ENCODE measurements at regions of chr7 and their contacts with region 1.

Region 1: DNA sequence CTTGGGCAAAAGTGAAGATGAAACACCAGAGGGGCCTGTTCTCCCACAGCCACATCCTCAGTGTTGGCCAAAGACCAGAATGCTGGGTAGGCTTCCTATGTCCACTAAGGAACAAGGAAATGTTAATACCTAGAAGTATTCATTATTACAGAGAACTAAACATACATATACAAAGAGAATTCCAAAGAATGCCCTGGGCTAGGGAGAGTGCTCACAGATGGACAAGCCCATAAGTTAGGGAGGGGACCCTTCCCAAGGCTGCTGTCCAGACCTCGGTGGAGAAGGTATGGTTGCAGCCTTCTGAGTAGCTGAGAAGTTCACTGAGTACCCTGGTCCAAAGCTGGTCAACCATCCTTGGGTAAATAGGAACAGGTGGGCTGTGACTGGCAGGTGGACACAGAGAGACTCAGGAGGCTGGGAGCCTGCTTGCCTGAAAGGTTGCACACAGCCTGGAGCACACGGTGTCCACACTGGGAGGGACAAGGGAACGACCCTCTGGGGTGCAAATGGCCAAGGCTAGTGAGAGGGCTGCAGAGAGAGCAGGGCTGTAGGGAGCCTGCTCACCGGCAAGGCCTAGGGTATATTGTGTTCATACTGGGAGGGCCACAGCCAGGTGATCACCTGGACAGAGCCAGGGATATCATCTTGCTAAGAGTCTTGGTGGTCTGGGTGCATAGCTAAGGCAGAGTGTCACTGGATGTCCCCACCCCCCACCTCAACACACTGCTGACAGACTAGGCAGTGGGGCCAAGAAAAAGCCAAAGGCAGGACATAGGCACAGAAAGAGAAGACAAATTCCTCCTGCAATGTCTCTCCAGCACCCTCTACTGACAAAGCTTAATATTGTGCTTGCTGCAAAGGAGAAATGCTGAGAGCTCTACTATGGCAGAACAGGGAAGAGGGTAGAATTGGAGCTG is 40.3 kb downstream of the CPVL start:
- DNase-seq: peak; percentile 52 to 58
- H3K4me3 ChIP-seq: no peak overlapping the region
- H3K27ac ChIP-seq: peak overlapping the region in 2 of 3 donors; percentile 55 to 58
- H3K4me1 ChIP-seq: peaks cover 28 to 48% of the 10 kb centered on the region in 2 donors
- H3K27me3 ChIP-seq: no peaks in the 10 kb centered on the region
- CTCF ChIP-seq: peak; percentile 78 to 96 (median 91)
- POLR2A ChIP-seq: no peak

Region 2: GRCh38 chr7:28926871-28927597 is 179.0 kb before region 1 on chr7:
- intact Hi-C with region 1: loop called (anchors 5 kb)
- DNase-seq: peak; percentile 80 to 81
- H3K4me3 ChIP-seq: peak overlapping the region in 1 of 3 donors; percentile 17
- H3K27ac ChIP-seq: peak overlapping the region in 2 of 3 donors; percentile 19 to 24
- H3K4me1 ChIP-seq: peaks cover 5 to 10% of the 10 kb centered on the region in 2 donors
- H3K27me3 ChIP-seq: no peaks in the 10 kb centered on the region
- CTCF ChIP-seq: peak; percentile 57 to 91 (median 81)
- POLR2A ChIP-seq: no peak

Region 3: DNA sequence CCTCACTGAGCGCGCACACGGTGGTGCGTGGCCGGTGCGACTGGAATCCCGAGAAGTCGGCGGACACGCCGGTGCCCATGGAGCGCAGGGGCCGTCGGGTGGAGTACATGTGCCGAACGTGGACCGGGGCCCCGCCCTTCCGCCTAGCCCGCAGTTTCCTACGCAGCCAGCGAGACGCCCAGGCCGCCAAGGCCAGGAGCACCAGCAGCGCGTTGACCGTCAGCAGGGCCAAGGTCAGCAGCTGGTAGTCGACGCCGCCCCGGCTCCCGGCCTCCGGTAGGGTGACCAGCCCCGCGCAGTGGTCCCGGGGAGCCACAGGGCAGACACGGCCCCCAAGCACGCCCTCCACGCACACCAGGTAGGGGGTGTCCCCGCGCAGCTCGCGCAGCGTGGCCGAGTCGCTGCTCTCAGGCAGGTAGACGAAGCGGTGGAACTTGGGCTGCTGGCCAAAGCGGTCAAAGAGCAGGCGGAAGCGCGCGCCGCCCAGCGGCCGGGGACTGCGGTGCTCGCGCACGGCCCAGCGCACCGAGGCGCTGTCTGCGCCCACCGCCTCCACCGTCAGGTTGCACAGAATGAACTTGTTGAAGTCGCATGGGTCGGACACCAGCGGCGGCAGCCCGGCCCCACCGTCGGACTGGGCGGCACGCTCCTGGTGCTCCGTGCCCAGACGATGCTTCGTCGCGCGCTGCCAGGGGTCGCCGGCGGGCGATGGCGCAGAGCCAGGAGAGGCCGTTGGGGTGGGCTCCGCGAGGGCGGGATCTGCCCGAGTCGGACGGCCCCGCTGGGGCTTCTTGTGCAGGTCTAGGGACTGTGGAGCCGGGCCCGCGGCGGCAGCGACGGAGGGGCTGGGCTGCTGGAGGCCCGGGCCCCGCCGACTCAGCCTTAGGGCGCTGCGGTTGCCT is 150.0 kb before region 1 on chr7:
- intact Hi-C with region 1: loop called (anchors 5 kb)
- DNase-seq: peak; percentile 92 to 94
- H3K4me3 ChIP-seq: peak overlapping the region; percentile 44 to 61 (median 46)
- H3K27ac ChIP-seq: peak overlapping the region; percentile 58 to 81 (median 73)
- H3K4me1 ChIP-seq: peaks cover 19 to 40% of the 10 kb centered on the region in 2 donors
- H3K27me3 ChIP-seq: no peaks in the 10 kb centered on the region
- CTCF ChIP-seq: peak; percentile 48 to 90 (median 76)
- POLR2A ChIP-seq: no peak

Region 4: DNA sequence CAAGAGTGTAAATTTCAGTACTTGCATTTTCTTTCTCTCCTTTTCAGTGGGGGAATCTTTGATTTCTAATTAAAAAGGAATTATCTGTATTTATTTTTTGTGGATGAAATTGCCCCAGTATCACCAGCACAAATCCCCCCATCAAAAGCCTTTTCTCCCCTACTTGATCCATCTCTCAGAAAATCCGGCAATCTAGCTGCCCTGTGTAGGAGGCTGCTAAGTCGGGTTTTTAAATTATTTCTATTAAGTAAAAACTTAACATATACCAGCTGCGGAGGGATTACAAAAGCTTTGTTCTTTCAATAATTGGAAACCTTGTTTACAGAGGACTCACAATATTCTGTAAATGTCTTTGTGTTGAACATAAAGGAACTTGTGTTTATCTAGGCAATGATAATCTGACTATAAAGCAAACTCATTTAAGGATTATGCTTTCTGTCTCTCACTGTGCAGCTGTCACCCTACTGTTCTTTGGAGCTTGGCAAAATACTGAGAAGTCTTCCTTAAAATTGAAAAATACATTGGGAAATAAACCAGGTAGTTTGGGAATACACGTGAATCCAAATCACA is 280.3 kb after region 1 on chr7:
- intact Hi-C with region 1: no loop called
- DNase-seq: no peak
- H3K4me3 ChIP-seq: no peak overlapping the region
- H3K27ac ChIP-seq: no peak overlapping the region
- H3K4me1 ChIP-seq: peaks cover 8 to 9% of the 10 kb centered on the region in 2 donors
- H3K27me3 ChIP-seq: no peaks in the 10 kb centered on the region
- CTCF ChIP-seq: no peak
- POLR2A ChIP-seq: no peak

Region 5: GRCh38 chr7:29408841-29409243 is 302.8 kb after region 1 on chr7:
- intact Hi-C with region 1: loop called (anchors 10 kb)
- DNase-seq: peak; percentile 42 to 44
- H3K4me3 ChIP-seq: no peak overlapping the region
- H3K27ac ChIP-seq: no peak overlapping the region
- H3K4me1 ChIP-seq: no peaks in the 10 kb centered on the region
- H3K27me3 ChIP-seq: no peaks in the 10 kb centered on the region
- CTCF ChIP-seq: peak; percentile 62 to 95 (median 78)
- POLR2A ChIP-seq: no peak

Measured in thyroid gland (tissue), 4 donors.